ENCODE measurements at regions of chr5 and their contacts with region 1.

Region 1: DNA sequence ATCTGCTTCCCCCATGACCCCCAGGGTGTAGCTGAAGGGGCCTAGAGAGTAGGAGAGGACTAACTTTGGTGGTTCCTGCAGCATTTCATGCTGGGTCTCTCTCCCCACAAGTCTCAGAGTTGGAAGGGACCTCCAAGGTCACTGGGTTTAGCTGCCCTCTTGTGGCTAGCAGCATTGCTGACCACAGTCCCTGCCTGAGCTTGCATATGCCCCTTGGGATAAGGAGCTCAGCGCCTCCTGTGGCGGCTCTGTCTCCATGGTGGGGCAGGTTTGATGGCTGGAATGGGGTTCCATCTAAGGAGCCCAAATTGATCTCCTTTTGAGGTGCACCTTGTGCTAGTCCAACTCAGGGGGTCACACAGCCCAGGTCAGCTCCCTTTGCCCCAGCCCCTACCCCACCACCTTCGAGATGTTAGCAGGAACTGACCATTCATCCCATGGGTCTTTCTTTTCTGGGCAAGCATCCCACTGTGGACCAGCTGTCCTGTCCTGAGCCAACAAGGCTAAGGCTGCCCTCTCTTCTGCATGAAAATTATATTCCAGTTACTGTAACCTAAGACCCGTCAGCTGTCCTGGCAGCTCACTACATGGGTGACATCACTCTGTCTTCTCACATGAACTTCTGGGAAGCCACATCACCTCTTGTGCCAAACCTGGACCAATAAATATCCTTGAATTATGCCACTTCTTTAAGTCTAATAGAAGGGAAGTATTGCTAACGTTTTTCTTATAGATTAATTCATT is 196.2 kb downstream of the HSPA4 start:
- DNase-seq: peak; percentile 43 to 64
- H3K4me3 ChIP-seq: no peak overlapping the region
- H3K27ac ChIP-seq: no peak overlapping the region
- H3K4me1 ChIP-seq: peaks cover 0 to 6% (median 2%) of the 10 kb centered on the region in 4 experiments; a peak in 3 of 7 replicates
- H3K27me3 ChIP-seq: no peaks in the 10 kb centered on the region
- CTCF ChIP-seq: peak in 2 of 3 experiments; percentile 97 to 99; a peak in 3 of 4 replicates
- EP300 ChIP-seq: no peak
- POLR2A ChIP-seq: no peak
- RAD21 ChIP-seq: peak; percentile 82 to 90

Region 2: DNA sequence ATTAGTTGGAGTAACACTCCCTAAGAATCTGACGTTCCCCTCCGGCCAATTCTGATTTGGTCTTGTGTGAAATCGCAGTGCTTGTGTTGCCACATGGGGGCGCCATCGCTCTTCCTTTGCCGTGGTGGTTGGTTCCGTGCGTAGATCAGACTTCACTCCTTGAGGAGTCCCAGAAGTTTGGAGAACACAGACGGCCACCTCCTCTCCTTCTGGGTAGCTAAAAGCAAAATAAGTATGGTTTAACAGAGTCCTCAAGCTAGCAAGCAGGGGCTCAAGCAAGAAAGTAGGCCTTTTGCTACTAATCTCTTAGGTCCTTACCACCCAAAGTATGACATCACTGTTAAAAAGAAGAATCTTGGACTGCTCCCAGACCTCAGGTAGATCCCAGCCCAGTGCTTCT is 136.8 kb before region 1 on chr5:
- CTCF ChIA-PET with region 1: interaction called, 150 read pairs
- POLR2A ChIA-PET with region 1: interaction called, 3 read pairs
- DNase-seq: peak; percentile 76 to 93
- H3K4me3 ChIP-seq: no peak overlapping the region
- H3K27ac ChIP-seq: no peak overlapping the region
- H3K4me1 ChIP-seq: no peaks in the 10 kb centered on the region; a peak in 1 of 7 replicates
- H3K27me3 ChIP-seq: no peaks in the 10 kb centered on the region
- CTCF ChIP-seq: peak; percentile 91 to 97 (median 95)
- EP300 ChIP-seq: no peak
- POLR2A ChIP-seq: no peak
- RAD21 ChIP-seq: peak; percentile 100

Region 3: DNA sequence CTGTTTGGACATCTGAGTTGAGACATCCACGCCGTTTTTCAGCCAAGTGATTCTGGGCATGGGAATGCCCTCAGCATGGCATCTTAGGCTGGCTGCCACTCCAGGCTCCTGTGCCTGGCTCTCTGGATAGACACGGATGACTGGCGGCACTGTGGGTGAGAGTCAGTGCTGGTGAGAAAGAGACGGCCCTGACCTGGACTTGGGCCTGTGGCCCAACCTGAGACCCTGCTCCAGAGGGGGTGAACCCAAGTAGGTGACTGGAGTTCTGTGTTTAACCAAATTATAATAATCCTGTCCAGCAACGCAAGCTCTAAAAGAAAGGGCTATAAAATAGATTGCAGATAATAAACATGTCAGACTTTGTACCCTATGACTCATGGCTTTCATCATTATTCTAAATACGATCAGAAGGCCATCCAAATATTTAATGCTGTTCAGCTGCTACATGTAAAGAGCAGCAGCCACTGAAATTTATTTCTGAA is 22.3 kb before region 1 on chr5:
- CTCF ChIA-PET with region 1: interaction called, 41 read pairs
- POLR2A ChIA-PET with region 1: interaction called, 3 read pairs
- DNase-seq: no peak
- H3K4me3 ChIP-seq: no peak overlapping the region
- H3K27ac ChIP-seq: no peak overlapping the region
- H3K4me1 ChIP-seq: peaks cover 0 to 5% (median 2%) of the 10 kb centered on the region in 4 experiments; a peak in 3 of 7 replicates
- H3K27me3 ChIP-seq: no peaks in the 10 kb centered on the region
- CTCF ChIP-seq: no peak
- EP300 ChIP-seq: no peak
- POLR2A ChIP-seq: no peak
- RAD21 ChIP-seq: no peak

Region 4: GRCh38 chr5:133265720-133266526 is 17.9 kb after region 1 on chr5:
- CTCF ChIA-PET with region 1: interaction called, 62 read pairs
- POLR2A ChIA-PET with region 1: no interaction called
- DNase-seq: no peak
- H3K4me3 ChIP-seq: no peak overlapping the region
- H3K27ac ChIP-seq: no peak overlapping the region
- H3K4me1 ChIP-seq: no peaks in the 10 kb centered on the region
- H3K27me3 ChIP-seq: no peaks in the 10 kb centered on the region
- CTCF ChIP-seq: no peak
- EP300 ChIP-seq: no peak
- POLR2A ChIP-seq: no peak
- RAD21 ChIP-seq: no peak

Region 5: DNA sequence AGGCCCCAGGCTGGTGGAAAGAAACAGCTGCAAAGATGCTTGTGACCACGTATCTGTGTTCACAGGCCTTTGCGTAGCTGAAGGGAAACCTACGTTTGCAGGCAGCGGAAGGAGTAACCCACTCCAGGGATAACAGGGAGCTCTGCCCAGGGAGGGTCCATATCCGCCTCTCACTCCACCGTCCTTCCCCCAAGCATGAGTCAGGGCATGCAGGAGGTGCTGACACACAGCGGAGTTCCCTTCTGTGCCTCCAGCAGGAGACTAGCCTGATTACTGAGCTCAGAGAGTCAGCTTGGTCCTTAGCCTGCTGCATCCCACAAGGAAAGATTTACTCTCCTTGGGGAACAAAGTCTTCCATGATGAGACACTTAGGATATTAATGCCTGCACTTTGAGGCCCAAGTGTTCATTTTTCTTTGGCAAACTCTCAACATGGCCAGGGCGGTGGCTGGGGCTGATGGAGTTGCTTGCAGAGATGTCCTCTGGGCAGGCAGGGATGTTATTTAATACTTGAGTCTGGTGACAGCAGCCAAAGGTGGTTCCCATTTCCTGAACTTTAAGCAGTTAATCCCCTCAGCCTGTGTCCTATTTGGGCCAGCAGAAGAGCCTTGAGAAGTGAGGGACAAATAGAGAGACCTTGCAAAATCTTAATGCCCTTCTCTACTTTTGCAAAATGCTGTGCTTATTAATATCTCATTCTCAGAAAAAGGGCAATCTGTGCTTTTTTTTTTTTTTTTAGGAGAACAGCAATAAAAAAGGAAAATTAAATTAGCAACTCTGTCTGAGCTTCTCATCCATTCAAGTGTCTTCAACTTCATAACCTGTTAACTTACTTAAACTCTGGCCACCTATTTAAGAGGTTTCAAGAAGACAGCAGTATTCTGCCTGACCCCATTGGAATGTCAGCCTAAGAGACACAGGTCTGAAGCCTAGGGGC is 25.9 kb after region 1 on chr5:
- CTCF ChIA-PET with region 1: interaction called, 37 read pairs
- POLR2A ChIA-PET with region 1: no interaction called
- DNase-seq: no peak
- H3K4me3 ChIP-seq: no peak overlapping the region
- H3K27ac ChIP-seq: no peak overlapping the region
- H3K4me1 ChIP-seq: no peaks in the 10 kb centered on the region; a peak in 3 of 7 replicates
- H3K27me3 ChIP-seq: no peaks in the 10 kb centered on the region
- CTCF ChIP-seq: no peak
- EP300 ChIP-seq: no peak
- POLR2A ChIP-seq: no peak
- RAD21 ChIP-seq: no peak

Region 6: GRCh38 chr5:133309166-133309795 is 61.2 kb after region 1 on chr5:
- CTCF ChIA-PET with region 1: interaction called, 12 read pairs
- POLR2A ChIA-PET with region 1: no interaction called
- DNase-seq: no peak
- H3K4me3 ChIP-seq: no peak overlapping the region
- H3K27ac ChIP-seq: no peak overlapping the region; the same call in 1 of the 2 replicates
- H3K4me1 ChIP-seq: no peaks in the 10 kb centered on the region
- H3K27me3 ChIP-seq: no peaks in the 10 kb centered on the region
- CTCF ChIP-seq: no peak
- EP300 ChIP-seq: no peak
- POLR2A ChIP-seq: no peak
- RAD21 ChIP-seq: no peak

Region 7: GRCh38 chr5:133323494-133324457 is 75.7 kb after region 1 on chr5:
- CTCF ChIA-PET with region 1: interaction called, 10 read pairs
- POLR2A ChIA-PET with region 1: no interaction called
- DNase-seq: no peak
- H3K4me3 ChIP-seq: no peak overlapping the region
- H3K27ac ChIP-seq: no peak overlapping the region
- H3K4me1 ChIP-seq: peaks cover 12 to 28% (median 21%) of the 10 kb centered on the region in 4 experiments
- H3K27me3 ChIP-seq: peaks cover 0 to 11% (median 9%) of the 10 kb centered on the region in 4 experiments; a peak in 3 of 7 replicates
- CTCF ChIP-seq: no peak
- EP300 ChIP-seq: no peak
- POLR2A ChIP-seq: no peak
- RAD21 ChIP-seq: no peak